ENCODE measurements at regions of chr1 and their contacts with region 1.

Region 1: DNA sequence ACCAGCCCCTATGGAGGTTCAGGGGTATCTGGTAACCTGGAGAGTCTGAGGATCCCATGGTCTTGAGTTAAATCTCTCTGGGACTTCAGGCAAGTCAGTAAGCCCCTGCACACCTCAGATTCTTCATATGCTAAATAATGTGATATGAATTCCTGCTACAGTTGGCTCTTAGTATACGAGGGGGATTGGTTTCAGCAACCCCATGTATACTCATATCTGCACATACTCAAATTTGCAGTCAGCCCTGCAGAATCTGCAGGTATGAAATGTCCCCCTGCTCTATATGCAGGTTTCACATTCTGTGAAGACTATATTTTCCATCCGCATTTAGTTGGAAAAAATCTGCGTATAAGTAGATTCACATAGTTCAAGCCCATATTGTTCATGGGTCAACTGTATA is 136.6 kb downstream of the TOMM20 start:
- DNase-seq: no peak
- ATAC-seq: no peak
- H3K4me3 ChIP-seq: no peak overlapping the region
- H3K27ac ChIP-seq: no peak overlapping the region
- H3K4me1 ChIP-seq: peaks cover 26% of the 10 kb centered on the region
- H3K27me3 ChIP-seq: no peaks in the 10 kb centered on the region
- CTCF ChIP-seq: no peak

Region 2: DNA sequence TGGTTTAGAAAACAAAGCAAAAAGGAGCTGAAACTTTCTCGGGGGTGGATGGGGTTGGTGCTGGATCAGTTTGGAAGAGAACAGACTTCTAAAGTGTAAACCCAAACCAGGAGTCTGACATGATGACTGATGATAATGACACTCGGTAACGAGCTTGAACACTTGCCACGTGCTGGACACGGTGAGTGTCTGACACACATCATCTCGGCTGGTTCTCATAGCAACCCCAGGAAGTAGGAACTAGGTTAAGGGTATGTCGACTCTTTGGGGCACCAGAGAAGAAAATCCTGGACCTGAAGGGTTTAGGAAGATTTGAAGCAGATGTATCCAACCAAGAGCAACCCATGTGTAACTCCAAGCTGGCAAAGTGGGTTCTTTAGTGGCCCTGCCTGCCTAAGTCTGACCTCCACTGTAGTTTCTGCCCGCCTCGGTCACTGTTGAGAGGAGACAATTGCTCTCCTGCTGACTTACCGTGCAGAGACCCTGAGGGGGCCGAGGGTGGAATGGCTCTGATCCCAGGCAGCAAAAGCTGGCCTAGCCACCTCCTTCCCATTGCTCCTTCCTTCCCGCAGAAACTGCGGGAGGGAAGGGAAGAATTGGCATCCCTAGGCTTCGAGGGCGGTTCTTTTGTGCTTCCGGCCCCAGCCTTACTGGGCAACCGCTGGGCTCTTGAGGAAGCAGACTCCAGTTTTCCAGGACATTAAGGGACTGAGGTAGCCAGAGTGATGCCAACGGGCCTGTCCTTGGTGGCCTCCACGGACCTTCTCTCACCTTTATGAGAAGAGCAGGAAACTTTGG is 19.5 kb before region 1 on chr1:
- CTCF ChIA-PET with region 1: interaction called, 10 read pairs
- POLR2A ChIA-PET with region 1: interaction called, 6 read pairs
- intact Hi-C with region 1: loop called (anchors 1 kb)
- DNase-seq: no peak
- ATAC-seq: no peak
- H3K4me3 ChIP-seq: no peak overlapping the region
- H3K27ac ChIP-seq: no peak overlapping the region
- H3K4me1 ChIP-seq: peaks cover 58% of the 10 kb centered on the region
- H3K27me3 ChIP-seq: no peaks in the 10 kb centered on the region
- CTCF ChIP-seq: no peak

Measured in PC-3 (cell line).